Ovary (tissue), 10 donors: ENCODE measurements at regions of chr13 and their contacts with region 1.

Region 1: GRCh38 chr13:100619940-100620339 is 31.4 kb upstream of the GGACT start:
- DNase-seq: no peak
- H3K4me3 ChIP-seq: no peak overlapping the region
- H3K27ac ChIP-seq: no peak overlapping the region
- H3K4me1 ChIP-seq: no peaks in the 10 kb centered on the region
- H3K27me3 ChIP-seq: no peaks in the 10 kb centered on the region
- CTCF ChIP-seq: no peak
- EP300 ChIP-seq: no peak
- POLR2A ChIP-seq: no peak

Region 2: GRCh38 chr13:100646871-100647270 is 26.9 kb after region 1 on chr13:
- intact Hi-C with region 1: loop called in 1 of 4 experiments (anchors 1 kb)
- DNase-seq: no peak
- H3K4me3 ChIP-seq: no peak overlapping the region
- H3K27ac ChIP-seq: no peak overlapping the region
- H3K4me1 ChIP-seq: no peaks in the 10 kb centered on the region
- H3K27me3 ChIP-seq: no peaks in the 10 kb centered on the region
- CTCF ChIP-seq: no peak
- EP300 ChIP-seq: no peak
- POLR2A ChIP-seq: no peak